CD4-positive, alpha-beta memory T cell (primary cell): ENCODE measurements at regions of chr16 and their contacts with region 1.

Region 1: GRCh38 chr16:30957456-30958174 is at the start of gene SETD1A:
- DNase-seq: peak; percentile 97 to 98 (median 98)
- H3K4me3 ChIP-seq: peak within 1 kb of the TSS; percentile 85 to 95
- H3K4me3 Mint-ChIP-seq: peak within 1 kb of the TSS; percentile 95 to 99 (median 96)
- H3K27ac ChIP-seq: peak within 1 kb of the TSS; percentile 92
- H3K27ac Mint-ChIP-seq: peak within 1 kb of the TSS; percentile 98 to 100 (median 99)
- H3K4me1 ChIP-seq: peaks cover 30% of the 10 kb centered on the region
- H3K4me1 Mint-ChIP-seq: peaks cover 13 to 43% (median 31%) of the 10 kb centered on the region in 4 donors
- H3K27me3 ChIP-seq: no peaks in the 10 kb centered on the region
- H3K27me3 Mint-ChIP-seq: peaks cover 0 to 4% of the 10 kb centered on the region in 2 donors
- total RNA-seq, gene SETD1A: 32.1 to 33.2 TPM

Region 2: DNA sequence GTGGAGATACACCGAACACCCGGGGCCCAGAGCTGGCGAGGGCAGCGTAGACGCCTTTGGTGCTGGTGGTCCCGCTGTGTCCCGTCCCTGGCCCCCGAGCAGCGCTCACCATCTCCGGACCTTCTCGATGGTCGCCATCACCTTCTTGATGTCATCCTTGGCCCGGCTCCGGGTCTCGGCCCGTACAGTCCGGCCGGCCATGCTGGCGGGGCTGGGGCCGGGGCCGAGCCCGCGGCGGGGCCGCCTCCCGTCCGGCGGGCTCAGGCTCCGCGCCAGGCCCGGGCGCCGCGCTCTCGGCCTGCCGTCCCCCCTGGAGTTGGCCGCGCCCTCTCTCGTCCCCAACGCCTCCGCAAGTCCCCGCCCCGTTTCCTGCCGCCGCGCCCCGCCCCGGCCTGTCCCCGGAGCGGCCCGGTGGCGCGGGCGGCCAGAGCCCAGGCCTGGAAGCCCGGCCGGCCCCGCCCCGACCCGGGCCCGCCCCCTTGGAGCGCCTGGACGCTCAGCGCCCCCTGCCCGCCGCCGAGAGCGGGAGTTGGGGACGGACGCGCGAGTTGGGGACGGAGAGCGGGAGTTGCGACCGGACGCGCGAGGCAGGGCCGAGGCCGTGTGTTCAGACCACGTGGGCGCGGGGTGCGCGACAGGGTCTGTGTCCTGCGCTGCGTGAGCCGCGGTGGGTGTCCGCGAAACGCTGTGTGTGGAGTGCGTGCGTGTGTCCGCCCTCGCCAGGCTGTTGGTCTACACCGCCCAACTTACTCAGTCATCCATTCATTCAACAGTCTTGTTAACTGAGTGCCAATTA is 63.7 kb before region 1 on chr16 and contains the start of gene BCL7C:
- CTCF ChIA-PET with region 1: no interaction called
- POLR2A ChIA-PET with region 1: no interaction called
- intact Hi-C with region 1: loop called (anchors 2 kb)
- DNase-seq: peak; percentile 63 to 82 (median 67)
- H3K4me3 ChIP-seq: peak within 1 kb of the TSS; percentile 52 to 75
- H3K4me3 Mint-ChIP-seq: peak within 1 kb of the TSS; percentile 85 to 95 (median 90)
- H3K27ac ChIP-seq: peak within 1 kb of the TSS; percentile 79
- H3K27ac Mint-ChIP-seq: peak within 1 kb of the TSS; percentile 85 to 97 (median 93)
- H3K4me1 ChIP-seq: peaks cover 35% of the 10 kb centered on the region
- H3K4me1 Mint-ChIP-seq: peaks cover 29 to 55% (median 43%) of the 10 kb centered on the region in 4 donors
- H3K27me3 ChIP-seq: no peaks in the 10 kb centered on the region
- H3K27me3 Mint-ChIP-seq: no peaks in the 10 kb centered on the region
- total RNA-seq, gene BCL7C: 25.5 to 27.3 TPM

Region 3: GRCh38 chr16:30941600-30942425 is 15.8 kb before region 1 on chr16:
- CTCF ChIA-PET with region 1: interaction called, 65 read pairs
- POLR2A ChIA-PET with region 1: interaction called, 7 read pairs
- intact Hi-C with region 1: no loop called
- DNase-seq: peak; percentile 46 to 60 (median 59)
- H3K4me3 ChIP-seq: peak overlapping the region in 1 of 2 donors; percentile 22
- H3K4me3 Mint-ChIP-seq: peak overlapping the region in 3 of 8 donors; percentile 15 to 29 (median 29)
- H3K27ac ChIP-seq: no peak overlapping the region
- H3K27ac Mint-ChIP-seq: peak overlapping the region in 4 of 7 donors; percentile 5 to 78 (median 49)
- H3K4me1 ChIP-seq: peaks cover 9% of the 10 kb centered on the region
- H3K4me1 Mint-ChIP-seq: peaks cover 9 to 24% (median 21%) of the 10 kb centered on the region in 4 donors
- H3K27me3 ChIP-seq: no peaks in the 10 kb centered on the region
- H3K27me3 Mint-ChIP-seq: no peaks in the 10 kb centered on the region

Region 4: DNA sequence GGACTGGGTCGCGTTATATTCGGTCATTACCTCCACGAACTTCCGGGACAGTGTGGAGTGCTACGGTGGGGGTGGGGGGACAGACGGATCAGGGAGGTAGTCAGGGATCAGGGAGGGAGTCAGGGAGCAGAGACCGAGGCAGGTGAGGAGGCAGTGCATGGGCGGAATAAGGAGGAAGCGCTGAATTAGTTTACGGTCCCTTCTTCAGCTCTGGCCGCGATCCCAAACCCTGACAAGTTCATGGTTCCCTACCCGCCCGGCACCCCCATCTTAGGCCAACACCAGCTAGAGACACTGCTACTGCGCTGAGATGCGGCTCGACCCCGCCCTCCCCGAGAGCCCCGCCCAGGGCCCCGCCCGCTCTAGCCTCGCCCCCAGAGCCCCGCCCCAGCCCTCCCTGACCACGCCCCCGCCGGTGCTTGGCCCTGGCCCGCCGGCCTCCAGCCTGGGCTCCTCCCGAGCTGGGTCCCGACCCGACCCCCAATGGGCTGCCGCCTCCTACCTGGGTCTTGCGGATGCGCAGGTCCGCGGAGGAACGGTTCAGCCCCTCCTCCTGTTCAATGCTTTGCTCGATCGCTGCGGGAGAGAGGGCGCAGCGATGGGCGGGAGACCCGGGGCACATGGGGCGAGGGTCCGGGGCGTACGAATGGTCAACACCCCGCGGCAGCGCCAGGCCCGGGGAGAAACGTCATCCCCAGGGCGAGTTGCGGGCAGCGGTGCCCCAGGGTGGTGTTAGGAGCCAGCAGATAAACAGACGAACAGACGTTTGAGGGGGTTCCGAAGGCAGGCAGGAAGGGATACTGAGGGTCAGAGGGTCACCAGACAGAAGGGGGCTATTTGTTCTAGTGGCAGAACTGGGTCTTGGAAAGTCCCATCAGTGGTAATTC is 39.6 kb after region 1 on chr16:
- CTCF ChIA-PET with region 1: no interaction called
- POLR2A ChIA-PET with region 1: no interaction called
- intact Hi-C with region 1: loop called (anchors 5 kb)
- DNase-seq: peak; percentile 59 to 82 (median 66)
- H3K4me3 ChIP-seq: peak overlapping the region; percentile 60 to 69
- H3K4me3 Mint-ChIP-seq: peak overlapping the region; percentile 67 to 86 (median 82)
- H3K27ac ChIP-seq: peak overlapping the region; percentile 47
- H3K27ac Mint-ChIP-seq: peak overlapping the region in 6 of 7 donors; percentile 54 to 89 (median 85)
- H3K4me1 ChIP-seq: peaks cover 11% of the 10 kb centered on the region
- H3K4me1 Mint-ChIP-seq: peaks cover 2 to 6% (median 4%) of the 10 kb centered on the region in 4 donors
- H3K27me3 ChIP-seq: no peaks in the 10 kb centered on the region
- H3K27me3 Mint-ChIP-seq: no peaks in the 10 kb centered on the region

Region 5: DNA sequence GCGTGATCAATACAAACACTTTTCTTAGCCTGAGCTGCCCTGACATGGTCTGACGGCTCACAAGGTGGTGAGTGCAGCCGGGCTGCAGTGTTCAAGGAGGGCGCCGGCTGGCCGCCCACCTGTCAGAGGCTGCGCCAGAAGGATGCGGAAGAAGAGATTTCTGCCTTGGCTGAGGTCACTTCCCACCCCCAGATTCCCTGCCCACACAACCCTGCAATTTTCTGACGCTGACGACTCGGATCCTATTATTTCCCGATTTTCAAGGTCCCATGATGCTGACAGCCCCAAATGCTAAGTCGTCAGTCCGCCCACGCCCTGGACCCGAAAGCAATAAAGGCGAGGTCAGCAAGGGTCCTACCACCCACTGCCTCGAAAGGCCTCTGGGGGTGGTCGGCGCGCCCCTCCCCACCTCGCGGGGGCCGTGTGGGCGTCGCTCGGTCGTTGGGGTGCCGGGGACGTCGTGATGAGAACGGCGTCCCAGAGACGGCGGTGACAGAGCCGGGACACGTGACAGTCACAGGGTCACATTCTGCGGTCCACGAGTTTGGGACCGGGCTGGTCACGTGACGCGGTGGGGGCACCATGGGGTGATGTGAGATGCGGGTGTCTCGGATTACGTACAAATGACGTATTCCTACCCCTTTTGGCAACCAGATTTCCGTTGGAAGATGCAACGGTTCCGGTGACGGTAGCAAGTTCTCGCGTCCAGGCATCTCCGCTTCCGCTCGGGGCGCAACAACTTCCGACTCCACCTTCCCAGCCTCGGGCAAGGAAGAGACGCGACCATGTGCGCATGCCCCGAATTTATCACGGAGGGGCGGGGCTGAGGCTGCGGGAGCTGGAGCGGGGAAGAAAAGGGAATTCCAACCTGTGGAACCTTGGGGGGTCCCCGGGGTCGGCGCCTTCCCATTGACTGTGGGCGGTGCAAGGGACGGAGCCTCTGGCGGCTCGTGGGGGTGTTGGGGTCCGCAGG is 75.4 kb after region 1 on chr16 and contains the start of gene STX4:
- CTCF ChIA-PET with region 1: no interaction called
- POLR2A ChIA-PET with region 1: interaction called, 3 read pairs
- intact Hi-C with region 1: loop called (anchors 1 kb)
- DNase-seq: peak; percentile 95 to 100 (median 98)
- H3K4me3 ChIP-seq: peak within 1 kb of the TSS; percentile 83 to 97
- H3K4me3 Mint-ChIP-seq: peak within 1 kb of the TSS; percentile 91 to 98 (median 95)
- H3K27ac ChIP-seq: peak within 1 kb of the TSS; percentile 86
- H3K27ac Mint-ChIP-seq: peak within 1 kb of the TSS; percentile 93 to 98 (median 98)
- H3K4me1 ChIP-seq: peaks cover 24% of the 10 kb centered on the region
- H3K4me1 Mint-ChIP-seq: peaks cover 6 to 38% (median 22%) of the 10 kb centered on the region in 4 donors
- H3K27me3 ChIP-seq: no peaks in the 10 kb centered on the region
- H3K27me3 Mint-ChIP-seq: no peaks in the 10 kb centered on the region
- total RNA-seq, gene STX4: 106 to 111 TPM

Region 6: GRCh38 chr16:31081428-31082351 is 124.1 kb after region 1 on chr16:
- CTCF ChIA-PET with region 1: no interaction called
- POLR2A ChIA-PET with region 1: no interaction called
- intact Hi-C with region 1: no loop called
- DNase-seq: no peak
- H3K4me3 ChIP-seq: no peak overlapping the region
- H3K4me3 Mint-ChIP-seq: no peak overlapping the region
- H3K27ac ChIP-seq: no peak overlapping the region
- H3K27ac Mint-ChIP-seq: peak overlapping the region in 2 of 7 donors; percentile 44 to 65
- H3K4me1 ChIP-seq: peaks cover 10% of the 10 kb centered on the region
- H3K4me1 Mint-ChIP-seq: peaks cover 1 to 35% (median 8%) of the 10 kb centered on the region in 4 donors
- H3K27me3 ChIP-seq: no peaks in the 10 kb centered on the region
- H3K27me3 Mint-ChIP-seq: no peaks in the 10 kb centered on the region

Region 7: DNA sequence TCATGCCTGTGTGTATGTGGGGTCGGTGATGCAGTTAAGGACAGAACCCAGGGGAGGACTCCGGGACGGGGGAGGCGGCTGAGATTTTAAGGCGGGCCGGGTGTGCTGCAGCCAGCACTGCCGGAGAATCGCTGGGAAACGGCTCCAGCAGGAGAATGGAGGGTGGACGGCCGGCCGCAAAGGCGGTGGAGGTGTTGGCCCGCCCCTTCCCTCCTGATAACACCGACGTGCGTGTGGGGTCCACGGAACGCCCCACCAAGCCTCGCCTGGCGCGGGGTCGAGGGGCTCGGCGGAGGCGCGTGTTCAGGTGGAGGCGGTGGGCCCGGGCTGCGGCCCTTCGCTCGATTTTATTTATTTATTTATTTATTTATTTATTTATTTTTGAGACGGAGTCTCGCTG is 484.3 kb after region 1 on chr16:
- CTCF ChIA-PET with region 1: no interaction called
- POLR2A ChIA-PET with region 1: interaction called, 3 read pairs
- intact Hi-C with region 1: loop called (anchors 2 kb)
- DNase-seq: no peak
- H3K4me3 ChIP-seq: no peak overlapping the region
- H3K4me3 Mint-ChIP-seq: peak overlapping the region; percentile 75 to 91 (median 84)
- H3K27ac ChIP-seq: no peak overlapping the region
- H3K27ac Mint-ChIP-seq: peak overlapping the region in 2 of 7 donors; percentile 3 to 73
- H3K4me1 ChIP-seq: no peaks in the 10 kb centered on the region
- H3K4me1 Mint-ChIP-seq: peaks cover 1 to 9% (median 6%) of the 10 kb centered on the region in 4 donors
- H3K27me3 ChIP-seq: no peaks in the 10 kb centered on the region
- H3K27me3 Mint-ChIP-seq: peaks cover 0 to 1% of the 10 kb centered on the region in 2 donors